Right ventricle myocardium inferior (tissue), 1 donor: ENCODE measurements at regions of chr22 and their contacts with region 1.

Region 1: DNA sequence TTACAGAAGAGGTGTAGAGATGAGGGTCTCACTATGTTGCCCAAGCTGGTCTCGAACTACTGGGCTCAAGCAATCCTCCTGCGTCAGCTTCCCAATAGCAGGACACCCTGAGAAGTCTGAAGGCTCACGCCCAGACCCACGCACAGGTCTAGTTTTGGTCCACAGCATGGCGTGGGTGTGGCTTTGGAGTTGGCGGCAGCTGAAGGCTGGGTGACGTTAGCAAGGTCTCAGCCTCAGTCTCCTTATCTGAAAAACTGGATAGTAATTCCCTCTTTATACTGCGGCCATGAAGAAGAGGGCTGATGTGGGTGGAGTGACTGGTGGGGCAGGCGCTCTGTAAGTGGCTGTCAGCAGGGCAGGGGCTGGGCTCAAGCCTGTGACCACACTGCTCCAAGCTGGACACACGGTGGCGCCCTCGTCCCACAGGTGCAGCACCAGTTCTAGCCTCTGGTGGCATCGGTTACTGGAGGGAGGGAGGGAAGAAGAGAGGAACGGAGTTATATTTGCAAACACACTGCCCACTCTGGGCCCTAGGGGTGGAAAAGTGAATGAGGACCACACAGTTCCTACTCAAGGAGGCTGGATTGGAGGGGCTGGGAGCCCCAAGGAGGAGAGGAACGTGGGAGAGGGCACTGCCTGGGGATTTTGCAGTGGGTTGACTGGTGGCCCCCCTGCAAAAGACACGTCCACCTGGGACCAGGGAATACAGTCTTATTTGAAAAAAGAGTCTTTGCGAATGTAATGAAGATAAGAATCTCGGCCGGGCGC is 19.6 kb upstream of the CARD10 start:
- DNase-seq: peak; percentile 96
- ATAC-seq: peak; percentile 99

Region 2: GRCh38 chr22:37254209-37254866 is 284.4 kb before region 1 on chr22:
- intact Hi-C with region 1: no loop called
- DNase-seq: no peak
- ATAC-seq: no peak

Region 3: GRCh38 chr22:37457093-37457893 is 81.5 kb before region 1 on chr22:
- intact Hi-C with region 1: no loop called
- DNase-seq: peak; percentile 76
- ATAC-seq: peak; percentile 72

Region 4: DNA sequence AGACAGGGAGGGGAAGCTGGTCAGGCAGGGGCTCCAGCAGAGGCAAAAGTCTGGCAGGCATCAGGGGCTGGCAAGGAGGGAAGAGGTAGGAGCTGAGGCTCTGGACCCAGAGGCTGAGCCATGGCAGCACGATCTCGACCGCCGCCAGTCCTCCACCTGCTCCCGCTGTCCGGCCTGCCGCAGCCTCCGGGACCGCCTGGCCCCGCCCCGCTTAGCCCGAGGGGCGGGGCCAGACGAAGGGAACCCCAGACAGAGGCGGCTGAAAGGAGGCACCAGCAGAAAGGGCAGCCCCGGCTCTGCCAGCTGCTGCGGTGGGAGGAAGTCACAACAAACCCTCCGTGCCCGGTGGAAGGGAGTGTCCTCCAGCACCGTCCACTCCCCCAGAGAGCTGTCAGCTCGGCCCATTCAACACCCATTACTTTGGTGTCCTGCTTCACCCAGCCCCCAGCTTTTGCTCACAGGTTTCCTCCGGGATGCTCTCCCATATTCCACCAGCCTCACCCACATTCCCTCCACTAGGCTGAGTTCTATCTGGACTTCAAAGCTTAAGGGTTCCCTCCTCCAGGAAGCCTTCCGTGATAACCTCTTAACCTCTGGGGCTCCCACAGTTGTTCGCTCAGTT is 52.4 kb before region 1 on chr22 and contains the start of gene MFNG:
- intact Hi-C with region 1: no loop called
- DNase-seq: peak; percentile 89
- ATAC-seq: peak; percentile 72
- total RNA-seq, gene MFNG: 14.4 TPM

Region 5: DNA sequence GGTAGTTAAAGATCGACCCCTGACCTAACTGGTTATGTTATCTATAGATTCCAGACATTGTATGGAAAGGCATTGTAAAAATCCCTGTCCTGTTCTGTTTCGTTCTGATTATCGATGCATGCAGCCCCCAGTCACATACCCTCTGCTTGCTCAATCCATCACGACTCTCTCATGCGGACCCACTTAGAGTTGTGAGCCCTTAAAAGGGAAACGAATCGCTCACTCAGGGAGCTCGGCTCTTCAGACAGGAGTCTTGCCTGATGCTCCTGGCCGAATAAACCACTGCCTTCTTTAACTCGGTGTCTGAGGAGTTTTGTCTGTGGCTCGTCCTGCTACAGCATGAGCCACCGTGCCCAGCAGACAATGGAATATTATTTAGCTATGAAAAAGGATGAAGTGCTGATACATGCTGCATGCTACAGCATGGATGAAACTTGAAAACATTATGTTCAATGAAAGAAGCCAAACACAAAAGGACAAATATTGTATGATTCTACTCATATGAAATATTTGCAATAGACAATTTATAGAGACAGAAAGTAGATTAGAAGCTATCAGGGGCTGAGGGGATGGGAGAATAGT is 53.1 kb after region 1 on chr22:
- intact Hi-C with region 1: loop called (anchors 1 kb)
- DNase-seq: no peak
- ATAC-seq: no peak